ENCODE measurements at regions of chr12 and their contacts with region 1.

Region 1: GRCh38 chr12:96906849-96907670 is at the start of gene NEDD1:
- DNase-seq: peak; percentile 92
- ATAC-seq: peak; percentile 97
- total RNA-seq, gene NEDD1: 22.2 TPM

Region 2: DNA sequence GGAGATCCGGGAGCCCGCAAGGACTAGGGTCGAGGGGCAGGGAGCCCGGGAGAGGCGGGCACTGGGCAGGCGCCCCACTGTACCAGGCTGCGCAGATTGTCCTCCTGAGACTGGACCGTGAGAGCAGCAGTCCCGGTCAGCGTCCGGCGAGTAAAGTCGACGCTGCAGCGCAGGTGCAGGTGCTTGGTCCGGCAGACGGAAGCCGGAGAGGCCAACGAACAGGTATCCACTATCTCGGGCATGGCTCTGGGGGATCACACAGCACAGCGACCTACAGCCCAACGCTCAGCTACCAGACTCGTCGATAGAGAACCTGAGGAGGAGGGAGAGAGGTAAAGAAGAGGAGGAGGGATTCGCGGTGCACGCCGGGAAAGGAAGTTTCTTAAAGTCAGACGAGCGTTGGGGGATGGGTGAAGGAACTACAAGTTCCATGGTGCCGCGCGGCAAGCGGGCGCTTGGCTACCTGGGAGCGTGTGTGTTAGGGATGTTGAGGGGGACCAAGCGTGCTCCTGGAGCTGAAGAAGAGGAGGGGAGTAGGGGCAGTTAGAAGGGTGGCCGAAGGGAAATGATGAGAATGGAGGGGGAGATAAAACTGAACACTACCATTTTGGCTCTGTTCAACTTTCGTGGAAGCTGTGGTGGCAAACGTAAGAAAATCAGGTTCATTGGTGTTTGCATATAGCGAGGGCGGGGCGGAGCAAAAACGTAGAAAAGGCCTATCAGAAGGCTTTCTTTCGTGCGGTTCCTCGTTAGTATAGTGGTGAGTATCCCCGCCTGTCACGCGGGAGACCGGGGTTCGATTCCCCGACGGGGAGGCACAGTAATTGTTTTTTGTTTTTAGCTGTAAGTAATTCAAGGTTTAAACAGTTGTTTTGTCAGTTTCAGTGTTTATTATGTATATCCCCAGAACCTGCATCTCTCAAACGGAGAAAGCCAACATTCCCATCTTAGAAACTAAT is 871.5 kb before region 1 on chr12 and contains the start of gene LTA4H:
- intact Hi-C with region 1: loop called (anchors 5 kb)
- DNase-seq: peak; percentile 97
- ATAC-seq: peak; percentile 99
- total RNA-seq, gene LTA4H: 56.5 TPM

Region 3: GRCh38 chr12:96886998-96887677 is 19.9 kb before region 1 on chr12:
- intact Hi-C with region 1: no loop called
- DNase-seq: peak; percentile 65
- ATAC-seq: peak; percentile 38